ENCODE measurements at regions of chr1 and their contacts with region 1.

Region 1: GRCh38 chr1:27102707-27103491 is 52.0 kb downstream of the SLC9A1 start:
- DNase-seq: peak; percentile 86

Region 2: DNA sequence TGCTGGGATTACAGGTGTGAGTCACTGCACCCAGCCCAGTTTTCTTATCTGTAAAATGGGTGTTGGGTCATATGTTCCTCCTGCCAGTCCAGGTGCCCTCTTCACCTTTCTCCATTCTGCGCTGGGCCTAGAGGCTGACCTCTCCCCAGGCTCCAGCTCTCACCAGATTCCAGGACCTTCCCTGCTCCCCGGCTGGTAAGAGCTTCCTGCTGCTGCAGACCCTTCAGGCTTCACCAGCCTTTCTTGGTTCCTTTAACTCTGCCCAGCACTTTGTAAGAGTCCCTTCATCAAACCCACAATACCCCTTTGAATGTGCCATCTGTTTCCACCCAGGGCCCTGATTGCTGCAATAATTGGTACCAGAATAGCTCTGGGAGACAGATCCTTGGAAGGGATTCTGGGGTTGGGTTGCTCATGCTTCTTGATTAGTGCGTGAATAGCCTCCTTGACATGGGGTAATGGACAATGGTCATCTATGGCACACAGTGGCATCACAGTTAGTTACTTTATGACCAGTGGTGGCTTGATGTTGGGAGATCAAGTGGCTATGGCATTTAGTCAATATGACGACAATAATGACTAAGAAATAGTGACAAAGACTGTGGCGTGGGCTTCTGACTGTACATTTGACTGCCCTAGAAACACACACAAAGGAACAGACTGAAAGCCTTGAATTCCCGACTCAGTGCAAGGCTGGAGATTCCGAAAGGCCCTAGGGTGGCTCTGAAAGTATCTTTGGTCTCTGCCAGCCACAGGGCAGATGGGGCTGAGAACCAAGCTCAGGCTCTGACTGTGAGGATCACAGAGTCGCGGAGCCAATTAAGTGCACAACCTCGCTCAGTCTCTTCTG is 15.3 kb before region 1 on chr1:
- CTCF ChIA-PET with region 1: no interaction called
- POLR2A ChIA-PET with region 1: no interaction called
- DNase-seq: no peak

Region 3: DNA sequence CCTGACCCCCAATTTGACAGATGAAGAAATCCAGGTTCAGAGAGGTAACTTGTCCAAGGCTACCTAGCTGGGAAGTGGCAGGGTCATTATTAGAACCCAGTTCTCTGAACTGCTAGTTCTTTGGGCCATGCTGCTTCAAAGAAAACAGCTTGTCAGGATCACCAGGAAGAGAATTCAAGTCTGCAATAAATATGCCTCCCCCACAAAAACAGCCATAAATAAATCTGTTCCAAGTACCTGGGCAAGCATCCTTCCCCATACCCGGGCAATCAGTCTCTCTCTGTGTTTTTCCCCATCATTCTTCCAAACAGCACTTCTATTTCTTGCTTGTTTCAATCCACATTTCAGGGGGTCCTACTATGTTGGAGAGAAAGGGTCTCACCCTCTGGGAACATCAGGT is 18.0 kb after region 1 on chr1:
- CTCF ChIA-PET with region 1: no interaction called
- POLR2A ChIA-PET with region 1: no interaction called
- DNase-seq: no peak

Region 4: GRCh38 chr1:27145934-27146354 is 43.0 kb after region 1 on chr1:
- CTCF ChIA-PET with region 1: no interaction called
- POLR2A ChIA-PET with region 1: no interaction called
- DNase-seq: no peak

Region 5: GRCh38 chr1:27284425-27285273 is 181.8 kb after region 1 on chr1:
- CTCF ChIA-PET with region 1: interaction called, 21 read pairs
- POLR2A ChIA-PET with region 1: no interaction called
- DNase-seq: peak; percentile 82

Region 6: DNA sequence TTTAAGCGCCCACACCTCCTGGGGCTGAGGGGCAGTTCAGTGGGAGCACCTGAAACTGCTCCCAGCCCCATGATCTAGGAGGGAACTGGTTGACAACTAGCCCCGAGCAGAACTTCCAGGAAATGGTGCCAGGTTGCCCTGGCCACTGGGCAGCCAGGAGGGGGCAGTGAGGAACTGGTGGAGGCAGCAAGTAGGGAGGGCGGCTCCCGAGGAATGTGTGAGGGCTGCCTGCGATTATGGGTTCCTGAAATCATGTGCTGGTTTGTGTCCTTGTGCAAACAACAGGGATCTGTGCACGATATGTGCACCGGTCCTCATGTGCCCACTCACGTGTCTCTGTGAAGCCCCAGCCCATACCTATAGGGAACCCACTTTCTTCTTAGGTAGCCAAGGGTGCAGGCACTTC is 299.5 kb after region 1 on chr1:
- CTCF ChIA-PET with region 1: no interaction called
- POLR2A ChIA-PET with region 1: no interaction called
- DNase-seq: no peak

Measured in HEK293T (cell line).